ENCODE measurements at regions of chr3 and their contacts with region 1.

Region 1: DNA sequence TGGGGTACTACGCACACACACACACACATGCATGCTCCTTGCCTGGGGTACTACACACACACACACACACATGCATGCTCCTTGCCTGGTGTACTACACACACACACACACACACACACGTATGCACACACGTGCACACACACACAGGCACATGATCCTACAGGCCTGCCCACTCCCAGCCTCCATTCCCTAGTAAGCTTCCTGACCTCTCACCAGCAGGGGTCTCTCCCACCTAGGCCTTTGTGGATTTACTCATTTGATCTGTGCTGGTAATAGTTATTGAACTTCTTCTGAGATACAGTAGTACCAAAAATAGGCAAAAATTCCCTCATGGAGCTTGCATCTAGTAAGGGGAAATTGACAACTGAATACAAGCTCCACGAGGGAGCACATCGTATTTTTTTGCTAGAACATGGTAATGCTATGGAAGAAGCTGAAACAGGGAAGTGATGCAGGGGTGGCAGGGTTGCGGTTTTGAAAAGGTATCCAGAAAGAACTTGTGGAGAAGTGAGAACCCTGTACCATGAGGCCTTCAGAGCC is 19.1 kb downstream of the TTC21A start:
- DNase-seq: no peak
- H3K4me3 ChIP-seq: no peak overlapping the region
- H3K27ac ChIP-seq: no peak overlapping the region
- H3K4me1 ChIP-seq: 0 out of 7 replicates have a peak, but pooled peaks cover 0 to 3% (median 0%) of the 10 kb centered on the region in 4 experiments
- H3K27me3 ChIP-seq: no peaks in the 10 kb centered on the region
- CTCF ChIP-seq: peak; percentile 69 to 72 (median 70)
- EP300 ChIP-seq: no peak
- POLR2A ChIP-seq: no peak
- RAD21 ChIP-seq: peak; percentile 84 to 87

Region 2: GRCh38 chr3:39141171-39141995 is 14.8 kb after region 1 on chr3:
- CTCF ChIA-PET with region 1: no interaction called
- POLR2A ChIA-PET with region 1: interaction called, 13 read pairs
- DNase-seq: no peak
- H3K4me3 ChIP-seq: no peak overlapping the region
- H3K27ac ChIP-seq: no peak overlapping the region; the same call in 1 of the 2 replicates
- H3K4me1 ChIP-seq: peaks cover 0 to 3% (median 0%) of the 10 kb centered on the region in 4 experiments; a peak in 2 of 7 replicates
- H3K27me3 ChIP-seq: no peaks in the 10 kb centered on the region
- CTCF ChIP-seq: no peak
- EP300 ChIP-seq: no peak
- POLR2A ChIP-seq: no peak
- RAD21 ChIP-seq: no peak

Region 3: DNA sequence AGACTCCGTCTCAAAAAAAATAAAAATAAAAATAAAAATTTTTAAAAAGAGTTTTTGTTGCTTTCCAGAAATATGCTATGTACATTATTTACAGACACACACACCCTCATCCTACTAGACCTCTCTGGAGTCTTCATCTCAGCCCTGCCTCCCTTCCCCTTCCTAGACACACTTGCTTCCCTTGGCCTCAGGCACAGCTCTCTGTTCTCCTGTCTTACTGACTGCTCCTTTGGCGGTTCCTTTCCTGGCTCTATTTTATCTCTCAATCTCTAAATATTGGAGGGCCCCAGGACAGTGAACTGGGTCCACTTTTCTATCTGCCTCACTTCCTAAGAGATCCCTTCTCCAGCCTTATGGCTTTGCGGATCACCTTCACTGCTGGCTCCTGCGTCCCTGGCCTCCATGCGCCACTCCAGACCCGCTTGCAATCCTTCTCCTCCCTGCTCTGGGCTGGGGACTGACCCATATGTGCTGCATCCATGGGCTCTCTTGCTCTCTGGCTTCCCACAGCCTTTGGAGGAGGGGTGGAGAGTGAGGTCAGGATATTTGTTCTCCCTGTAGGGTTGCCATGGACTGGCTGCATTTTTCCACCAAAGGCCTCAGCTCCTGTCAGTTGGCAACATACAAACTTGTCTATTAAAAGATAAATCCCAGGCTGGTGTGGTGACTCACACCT is 48.3 kb after region 1 on chr3:
- CTCF ChIA-PET with region 1: interaction called, 42 read pairs
- POLR2A ChIA-PET with region 1: interaction called, 3 read pairs
- DNase-seq: no peak
- H3K4me3 ChIP-seq: no peak overlapping the region
- H3K27ac ChIP-seq: no peak overlapping the region
- H3K4me1 ChIP-seq: peaks cover 2 to 14% (median 9%) of the 10 kb centered on the region in 4 experiments; a peak in 6 of 7 replicates
- H3K27me3 ChIP-seq: peaks cover 0 to 10% (median 8%) of the 10 kb centered on the region in 4 experiments; a peak in 5 of 7 replicates
- CTCF ChIP-seq: no peak
- EP300 ChIP-seq: no peak
- POLR2A ChIP-seq: no peak
- RAD21 ChIP-seq: no peak

Region 4: DNA sequence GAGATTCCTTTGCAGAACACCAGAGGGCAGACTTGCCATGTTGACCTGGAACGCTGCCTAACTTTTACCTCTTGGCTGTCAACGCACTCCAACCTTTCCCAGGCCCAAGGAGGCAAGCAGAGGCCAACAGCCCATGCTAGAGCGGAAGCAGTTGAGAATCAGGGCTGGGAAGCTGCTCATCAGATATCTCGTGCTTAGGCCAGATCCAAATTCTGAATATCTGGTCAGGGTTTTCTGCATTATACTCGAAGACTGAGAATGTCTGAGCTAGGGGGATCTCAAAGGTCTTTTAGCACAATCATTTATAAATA is 63.3 kb after region 1 on chr3:
- CTCF ChIA-PET with region 1: interaction called, 366 read pairs
- POLR2A ChIA-PET with region 1: interaction called, 5 read pairs
- DNase-seq: peak in 1 of 2 experiments; percentile 73
- H3K4me3 ChIP-seq: no peak overlapping the region
- H3K27ac ChIP-seq: no peak overlapping the region
- H3K4me1 ChIP-seq: no peaks in the 10 kb centered on the region
- H3K27me3 ChIP-seq: no peaks in the 10 kb centered on the region
- CTCF ChIP-seq: peak in 2 of 3 experiments; percentile 91 to 93; a peak in 3 of 4 replicates
- EP300 ChIP-seq: no peak
- POLR2A ChIP-seq: no peak
- RAD21 ChIP-seq: peak; percentile 93 to 96

Region 5: GRCh38 chr3:39208463-39209055 is 82.0 kb after region 1 on chr3:
- CTCF ChIA-PET with region 1: interaction called, 15 read pairs
- POLR2A ChIA-PET with region 1: no interaction called
- DNase-seq: no peak
- H3K4me3 ChIP-seq: no peak overlapping the region
- H3K27ac ChIP-seq: no peak overlapping the region
- H3K4me1 ChIP-seq: peaks cover 0 to 11% (median 6%) of the 10 kb centered on the region in 4 experiments; a peak in 5 of 7 replicates
- H3K27me3 ChIP-seq: no peaks in the 10 kb centered on the region
- CTCF ChIP-seq: peak; percentile 66 to 76 (median 67)
- EP300 ChIP-seq: no peak
- POLR2A ChIP-seq: no peak
- RAD21 ChIP-seq: peak; percentile 58 to 71

Region 6: GRCh38 chr3:39267631-39268548 is 141.3 kb after region 1 on chr3:
- CTCF ChIA-PET with region 1: interaction called, 112 read pairs
- POLR2A ChIA-PET with region 1: no interaction called
- DNase-seq: no peak
- H3K4me3 ChIP-seq: no peak overlapping the region
- H3K27ac ChIP-seq: no peak overlapping the region
- H3K4me1 ChIP-seq: no peaks in the 10 kb centered on the region
- H3K27me3 ChIP-seq: no peaks in the 10 kb centered on the region
- CTCF ChIP-seq: no peak
- EP300 ChIP-seq: no peak
- POLR2A ChIP-seq: no peak
- RAD21 ChIP-seq: no peak

Region 7: GRCh38 chr3:39378088-39378487 is 251.5 kb after region 1 on chr3:
- CTCF ChIA-PET with region 1: interaction called, 25 read pairs
- POLR2A ChIA-PET with region 1: no interaction called
- DNase-seq: peak in 1 of 2 experiments; percentile 69
- H3K4me3 ChIP-seq: no peak overlapping the region
- H3K27ac ChIP-seq: no peak overlapping the region
- H3K4me1 ChIP-seq: peaks cover 0 to 5% (median 0%) of the 10 kb centered on the region in 4 experiments; a peak in 2 of 7 replicates
- H3K27me3 ChIP-seq: no peaks in the 10 kb centered on the region
- CTCF ChIP-seq: peak; percentile 79 to 93 (median 90)
- EP300 ChIP-seq: no peak
- POLR2A ChIP-seq: no peak
- RAD21 ChIP-seq: peak; percentile 86 to 93

Measured in H1 (cell line).